Left cardiac atrium (tissue), 4 donors: ENCODE measurements at regions of chr4 and their contacts with region 1.

Region 1: GRCh38 chr4:74675673-74676279 is 118.5 kb downstream of the BTC start:
- DNase-seq: no peak
- ATAC-seq: peak; percentile 44 to 71

Region 2: GRCh38 chr4:74189331-74190043 is 486.3 kb before region 1 on chr4:
- intact Hi-C with region 1: loop called in 1 of 2 experiments (anchors 10 kb)
- DNase-seq: no peak
- ATAC-seq: peak in 1 of 2 donors; percentile 43

Region 3: GRCh38 chr4:74320559-74321118 is 355.1 kb before region 1 on chr4:
- intact Hi-C with region 1: loop called in 1 of 2 experiments (anchors 2 kb)
- DNase-seq: no peak
- ATAC-seq: peak; percentile 41 to 45

Region 4: DNA sequence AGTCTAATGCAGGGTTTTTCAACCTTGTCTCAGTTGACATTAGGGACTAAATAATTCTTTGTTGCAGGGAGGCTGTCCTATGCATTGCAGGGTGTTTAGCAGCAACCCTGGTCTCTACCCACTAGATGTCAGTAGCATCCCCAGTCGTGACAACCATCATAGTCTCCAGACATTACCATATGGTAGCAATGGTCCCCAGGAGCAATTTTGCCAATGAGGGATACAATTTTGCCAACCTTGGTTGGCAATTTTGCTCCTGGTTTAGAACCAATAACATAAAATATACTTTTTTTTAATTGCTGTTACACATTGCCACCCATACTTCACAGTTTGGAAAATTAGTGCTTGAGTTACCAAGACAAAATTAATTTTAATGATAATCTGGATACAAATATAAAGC is 304.9 kb before region 1 on chr4:
- intact Hi-C with region 1: loop called in 1 of 2 experiments (anchors 5 kb)
- DNase-seq: no peak
- ATAC-seq: peak; percentile 59 to 81

Region 5: GRCh38 chr4:74531963-74532794 is 143.6 kb before region 1 on chr4:
- intact Hi-C with region 1: loop called in 1 of 2 experiments (anchors 10 kb)
- DNase-seq: no peak
- ATAC-seq: peak; percentile 74 to 80

Region 6: DNA sequence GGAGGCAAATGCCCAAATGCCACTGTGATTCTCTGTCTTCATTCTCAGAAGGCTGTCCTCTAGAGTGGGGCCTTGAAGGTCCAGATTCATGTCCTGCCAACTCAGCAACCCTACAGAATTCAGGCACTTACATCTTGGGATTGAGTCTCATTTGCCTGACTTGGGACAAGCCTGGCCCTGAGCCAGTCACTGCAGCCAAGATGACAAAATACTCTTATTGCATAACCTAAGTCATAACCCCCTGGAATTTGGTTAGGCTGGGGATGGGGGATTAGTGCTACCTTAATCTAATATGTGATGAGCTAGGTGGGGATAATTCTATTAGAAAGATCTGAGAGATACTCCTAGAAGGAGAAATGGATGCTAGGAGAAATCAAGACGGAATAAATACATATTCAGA is 130.3 kb before region 1 on chr4:
- intact Hi-C with region 1: no loop called
- DNase-seq: peak; percentile 25
- ATAC-seq: no peak

Region 7: DNA sequence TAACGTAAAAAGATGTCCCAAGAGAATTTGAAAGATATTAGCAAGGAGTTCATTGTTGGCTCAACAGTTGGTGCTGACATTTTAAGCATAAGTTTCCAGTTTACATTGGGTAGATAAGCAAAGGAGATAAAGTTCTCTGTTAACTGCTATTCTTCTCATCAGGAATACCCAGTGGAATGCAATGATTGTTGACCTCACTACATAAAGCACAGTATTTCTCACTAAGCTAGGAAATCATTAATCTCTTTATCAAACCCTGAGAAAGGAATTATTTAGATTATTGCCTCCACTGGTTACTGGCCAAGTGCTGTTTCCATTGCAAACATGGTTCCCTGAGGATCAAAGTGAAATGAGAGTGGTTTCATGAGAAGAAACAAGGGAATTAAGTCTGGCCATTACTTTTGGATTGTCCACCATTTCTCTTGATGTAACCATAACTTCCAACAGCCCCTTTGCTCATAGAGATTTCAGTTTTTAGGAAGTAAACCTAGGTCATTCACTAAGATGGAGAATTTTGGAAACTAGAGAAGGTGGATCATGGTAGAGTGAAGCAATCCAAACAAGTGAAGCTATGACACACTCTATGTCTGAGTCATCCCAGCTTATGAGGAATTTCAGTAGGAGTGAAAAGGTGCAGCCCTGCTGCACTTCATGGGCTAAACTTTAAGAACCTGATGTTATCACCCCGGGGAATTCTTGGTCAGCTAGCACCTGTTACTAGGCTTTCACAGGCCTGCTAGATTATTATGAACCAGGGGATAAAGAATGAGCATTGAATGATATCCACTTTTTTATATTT is 67.4 kb before region 1 on chr4:
- intact Hi-C with region 1: no loop called
- DNase-seq: no peak
- ATAC-seq: peak in 1 of 2 donors; percentile 81

Region 8: GRCh38 chr4:74886490-74886889 is 210.7 kb after region 1 on chr4:
- intact Hi-C with region 1: no loop called
- DNase-seq: no peak
- ATAC-seq: peak in 1 of 2 donors; percentile 23